H1 (cell line): ENCODE measurements at regions of chr1 and their contacts with region 1.

Region 1: DNA sequence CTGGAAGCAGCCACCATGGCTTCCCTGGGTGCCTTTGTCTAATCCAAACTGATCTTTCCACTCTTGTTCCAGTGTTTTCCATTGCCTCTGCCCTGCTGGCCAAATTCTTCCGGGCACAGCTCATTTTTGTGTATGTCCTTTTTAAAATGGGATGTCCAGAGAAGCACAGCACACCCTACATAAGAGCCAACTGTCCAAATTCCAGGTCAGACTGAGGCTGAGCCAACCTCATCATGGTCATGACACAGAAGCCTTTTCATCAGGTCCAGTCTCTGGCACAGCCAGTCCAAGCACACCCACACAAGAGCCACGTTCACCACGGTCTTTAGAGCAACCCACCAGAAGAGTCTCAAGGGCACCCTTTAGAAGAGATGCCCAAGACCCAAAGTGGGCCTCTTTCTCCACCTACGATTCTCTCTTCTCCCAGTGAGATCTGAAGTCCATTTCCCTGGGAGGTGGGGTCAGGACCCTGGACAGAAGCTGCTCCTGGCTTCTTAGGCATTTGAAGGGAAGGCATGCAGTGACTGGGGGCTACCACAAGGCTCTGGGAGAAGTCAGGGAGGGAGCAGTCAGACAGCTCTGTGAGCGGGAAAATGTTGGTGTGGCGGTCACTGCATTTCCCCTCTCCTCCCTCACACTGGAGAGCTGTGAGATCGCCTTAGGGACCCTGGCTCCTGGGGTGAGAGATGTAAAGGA is 53.2 kb downstream of the SYT2 start:
- DNase-seq: peak; percentile 39 to 86
- H3K4me3 ChIP-seq: no peak overlapping the region
- H3K27ac ChIP-seq: no peak overlapping the region
- H3K4me1 ChIP-seq: peaks cover 0 to 3% (median 2%) of the 10 kb centered on the region in 4 experiments; a peak in 3 of 7 replicates
- H3K27me3 ChIP-seq: no peaks in the 10 kb centered on the region; a peak in 1 of 7 replicates
- CTCF ChIP-seq: peak; percentile 60 to 73 (median 64)
- EP300 ChIP-seq: no peak
- POLR2A ChIP-seq: no peak
- RAD21 ChIP-seq: peak; percentile 36 to 50; a peak in 3 of 4 replicates

Region 2: DNA sequence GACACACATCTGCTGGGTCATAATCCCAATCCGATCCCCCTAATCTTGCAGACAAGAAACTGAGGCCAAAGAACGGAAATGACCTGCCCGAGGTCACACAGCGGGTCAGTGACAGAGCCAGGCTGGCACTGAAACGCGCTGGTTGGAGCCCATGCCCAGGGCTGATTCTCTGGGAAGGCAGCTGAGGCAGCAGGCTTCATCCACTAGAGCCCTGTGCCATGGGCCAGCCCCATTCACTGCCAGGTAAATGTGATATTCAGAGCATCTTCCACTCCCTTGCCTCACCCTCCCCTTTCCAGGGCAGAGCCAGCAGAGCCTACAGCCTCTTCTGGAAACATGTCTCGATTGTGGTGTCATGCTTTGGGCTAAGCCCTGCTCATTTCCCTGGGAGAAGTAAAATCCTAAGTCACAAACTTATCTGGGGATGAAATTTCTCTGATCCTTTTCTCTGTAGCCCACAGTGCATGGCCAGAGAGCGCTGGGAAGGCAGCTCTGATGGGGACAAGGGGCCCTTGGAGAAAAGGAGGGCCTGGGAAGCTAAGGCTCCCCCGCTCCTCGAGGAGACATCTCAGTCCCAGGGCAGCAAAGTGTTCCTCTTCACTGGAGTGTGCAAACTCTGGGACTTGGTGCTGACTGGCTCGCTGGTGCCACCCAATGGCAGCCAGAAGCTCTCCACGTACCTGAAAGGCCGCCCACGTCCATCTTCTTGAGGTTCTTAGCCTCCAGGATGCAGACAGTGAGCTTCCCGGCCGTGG is 57.2 kb before region 1 on chr1:
- CTCF ChIA-PET with region 1: interaction called, 10 read pairs
- POLR2A ChIA-PET with region 1: no interaction called
- DNase-seq: peak; percentile 51 to 72
- H3K4me3 ChIP-seq: no peak overlapping the region
- H3K27ac ChIP-seq: no peak overlapping the region
- H3K4me1 ChIP-seq: no peaks in the 10 kb centered on the region
- H3K27me3 ChIP-seq: no peaks in the 10 kb centered on the region
- CTCF ChIP-seq: peak; percentile 80 to 96 (median 87)
- EP300 ChIP-seq: no peak
- POLR2A ChIP-seq: no peak
- RAD21 ChIP-seq: peak; percentile 89 to 92

Region 3: DNA sequence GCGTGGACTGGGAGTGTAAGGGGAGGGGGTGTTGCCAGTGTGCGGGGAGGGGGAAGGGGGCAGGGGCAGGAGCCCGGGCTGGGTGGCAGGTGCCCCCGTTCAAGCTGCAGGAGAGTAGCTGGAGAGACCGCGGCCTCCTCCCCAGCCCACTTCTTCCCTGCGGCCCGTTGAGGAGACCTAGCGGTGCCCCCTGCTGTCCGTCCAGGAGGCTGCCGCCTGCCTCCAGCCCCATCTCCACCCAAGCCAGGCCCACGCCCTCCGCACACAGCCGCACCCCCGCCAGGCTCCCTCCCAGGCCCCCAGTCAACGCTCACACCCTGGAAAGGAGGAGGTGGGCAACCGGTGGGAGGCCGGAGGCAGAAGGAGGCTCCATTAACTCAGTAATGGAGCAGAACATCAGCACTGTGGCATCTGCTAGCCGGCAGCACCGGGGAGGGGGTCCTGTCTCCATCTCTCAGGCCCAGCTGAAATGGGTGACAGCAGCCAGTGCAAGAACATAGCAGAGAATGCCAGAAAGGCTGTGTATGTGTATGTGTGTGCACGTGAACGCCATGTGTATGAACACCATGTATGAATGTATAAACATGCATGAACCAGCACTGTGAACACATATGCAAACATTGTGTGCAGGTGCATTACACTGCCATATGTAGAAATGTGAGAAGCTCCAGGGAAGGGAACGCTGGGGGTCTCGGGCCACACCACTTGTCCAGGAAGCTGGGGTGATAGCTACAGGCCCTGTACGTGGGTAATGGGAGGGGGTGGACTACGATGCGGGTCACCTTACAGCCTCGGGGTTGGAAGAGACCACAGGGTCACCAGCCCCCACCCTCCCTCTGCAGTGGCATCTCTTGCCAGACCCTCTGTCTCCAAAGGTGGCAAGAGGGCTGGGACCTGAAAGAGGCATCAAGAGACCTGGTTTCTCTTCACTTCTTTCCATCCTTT is 31.4 kb before region 1 on chr1:
- CTCF ChIA-PET with region 1: interaction called, 12 read pairs
- POLR2A ChIA-PET with region 1: no interaction called
- DNase-seq: peak; percentile 33 to 87
- H3K4me3 ChIP-seq: no peak overlapping the region
- H3K27ac ChIP-seq: no peak overlapping the region
- H3K4me1 ChIP-seq: peaks cover 0 to 13% (median 6%) of the 10 kb centered on the region in 4 experiments; a peak in 6 of 7 replicates
- H3K27me3 ChIP-seq: no peaks in the 10 kb centered on the region
- CTCF ChIP-seq: peak; percentile 61 to 82 (median 69)
- EP300 ChIP-seq: no peak
- POLR2A ChIP-seq: no peak
- RAD21 ChIP-seq: peak; percentile 63 to 74

Region 4: DNA sequence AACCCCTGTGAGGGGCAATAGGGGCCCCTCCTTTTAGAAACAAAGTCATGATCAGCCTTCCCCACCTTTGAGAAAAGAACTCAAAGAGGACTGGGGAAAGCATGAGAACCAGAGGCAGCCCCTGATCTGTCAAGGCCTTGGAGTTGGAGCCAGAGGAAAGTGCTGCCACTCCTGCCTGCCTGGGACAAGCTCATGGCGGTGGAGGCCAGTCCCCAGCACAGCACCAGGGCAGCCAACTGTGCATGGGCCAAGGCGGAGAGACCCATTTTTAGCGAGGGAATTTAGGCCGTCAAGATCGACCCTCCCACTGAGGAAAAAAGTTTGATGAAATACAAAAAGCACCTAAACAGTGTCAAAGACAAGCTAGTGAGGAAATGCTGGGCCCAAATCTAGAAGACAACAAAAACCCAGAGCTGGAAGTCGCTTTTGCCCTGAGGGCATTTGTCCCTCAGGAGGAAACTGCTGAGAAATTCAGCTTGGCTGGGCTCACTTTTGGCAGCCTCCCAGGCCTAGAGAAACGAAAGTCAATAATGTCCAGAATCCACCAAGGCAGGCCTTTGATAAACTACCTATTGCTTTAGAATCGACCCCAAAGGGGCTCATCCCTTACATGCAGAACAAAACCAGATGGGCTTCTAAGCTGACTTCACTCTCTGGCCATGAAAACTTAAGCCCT is 14.2 kb after region 1 on chr1:
- CTCF ChIA-PET with region 1: interaction called, 57 read pairs
- POLR2A ChIA-PET with region 1: interaction called, 3 read pairs
- DNase-seq: no peak
- H3K4me3 ChIP-seq: no peak overlapping the region
- H3K27ac ChIP-seq: no peak overlapping the region
- H3K4me1 ChIP-seq: no peaks in the 10 kb centered on the region; a peak in 1 of 7 replicates
- H3K27me3 ChIP-seq: no peaks in the 10 kb centered on the region
- CTCF ChIP-seq: no peak
- EP300 ChIP-seq: no peak
- POLR2A ChIP-seq: no peak
- RAD21 ChIP-seq: no peak

Region 5: DNA sequence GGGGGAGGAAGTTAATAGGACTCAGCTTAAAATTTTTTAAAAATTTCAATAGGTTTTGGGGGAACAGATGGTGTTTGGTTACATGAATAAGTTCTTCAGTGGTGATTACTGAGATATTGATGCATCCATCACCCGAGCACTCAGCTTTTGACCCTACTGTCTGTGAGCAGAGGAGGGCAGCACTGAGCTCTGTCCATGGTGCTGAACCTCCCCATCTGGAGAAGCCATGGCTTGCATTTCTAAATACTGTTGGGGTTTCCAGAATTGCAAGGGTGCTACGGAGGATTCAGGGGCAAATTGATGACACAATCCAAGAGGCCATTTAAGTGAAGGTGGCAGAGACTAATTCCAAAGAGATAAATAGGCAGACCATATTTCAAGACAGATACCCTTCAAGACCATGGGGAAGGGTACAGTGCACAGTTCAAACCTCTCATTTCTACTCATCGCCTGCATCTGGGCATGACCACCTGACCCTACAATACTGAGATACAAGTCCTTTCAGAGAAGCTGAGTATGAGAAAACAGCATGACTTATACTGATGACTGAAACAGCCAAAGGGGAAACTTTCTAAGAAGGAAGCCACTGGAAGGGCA is 36.0 kb after region 1 on chr1:
- CTCF ChIA-PET with region 1: interaction called, 105 read pairs
- POLR2A ChIA-PET with region 1: no interaction called
- DNase-seq: peak in 1 of 2 experiments; percentile 90
- H3K4me3 ChIP-seq: no peak overlapping the region
- H3K27ac ChIP-seq: no peak overlapping the region
- H3K4me1 ChIP-seq: 0 out of 7 replicates have a peak, but pooled peaks cover 0 to 2% (median 0%) of the 10 kb centered on the region in 4 experiments
- H3K27me3 ChIP-seq: 0 out of 7 replicates have a peak, but pooled peaks cover 0 to 3% (median 0%) of the 10 kb centered on the region in 4 experiments
- CTCF ChIP-seq: peak; percentile 30 to 52 (median 49); a peak in 3 of 4 replicates
- EP300 ChIP-seq: no peak
- POLR2A ChIP-seq: no peak
- RAD21 ChIP-seq: peak in 1 of 2 experiments; percentile 39; a peak in 1 of 4 replicates

Region 6: DNA sequence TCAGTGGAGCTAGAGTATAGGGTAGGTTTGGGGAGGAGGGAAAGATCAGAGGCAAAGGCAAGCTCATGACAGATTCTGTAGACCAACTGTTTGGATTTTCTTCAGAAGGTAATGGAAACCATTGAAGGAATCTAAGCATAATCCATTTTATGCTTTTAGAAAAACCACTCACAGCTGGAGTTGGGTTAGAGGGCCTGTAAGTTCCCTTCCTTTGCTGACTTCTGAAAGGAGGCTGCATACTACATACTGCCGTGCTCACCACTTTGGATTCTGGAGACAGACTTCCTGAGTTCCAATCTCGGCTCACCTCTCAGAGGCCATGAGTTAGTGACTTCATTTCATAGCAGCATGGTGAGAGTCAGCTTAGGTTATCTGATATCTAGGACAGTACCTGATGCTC is 59.6 kb after region 1 on chr1:
- CTCF ChIA-PET with region 1: interaction called, 146 read pairs
- POLR2A ChIA-PET with region 1: no interaction called
- DNase-seq: no peak
- H3K4me3 ChIP-seq: no peak overlapping the region
- H3K27ac ChIP-seq: no peak overlapping the region
- H3K4me1 ChIP-seq: peaks cover 7 to 15% (median 13%) of the 10 kb centered on the region in 4 experiments
- H3K27me3 ChIP-seq: no peaks in the 10 kb centered on the region; a peak in 1 of 7 replicates
- CTCF ChIP-seq: no peak
- EP300 ChIP-seq: no peak
- POLR2A ChIP-seq: no peak
- RAD21 ChIP-seq: no peak